Heart right ventricle (tissue), 16 donors: ENCODE measurements at regions of chr17 and their contacts with region 1.

Region 1: DNA sequence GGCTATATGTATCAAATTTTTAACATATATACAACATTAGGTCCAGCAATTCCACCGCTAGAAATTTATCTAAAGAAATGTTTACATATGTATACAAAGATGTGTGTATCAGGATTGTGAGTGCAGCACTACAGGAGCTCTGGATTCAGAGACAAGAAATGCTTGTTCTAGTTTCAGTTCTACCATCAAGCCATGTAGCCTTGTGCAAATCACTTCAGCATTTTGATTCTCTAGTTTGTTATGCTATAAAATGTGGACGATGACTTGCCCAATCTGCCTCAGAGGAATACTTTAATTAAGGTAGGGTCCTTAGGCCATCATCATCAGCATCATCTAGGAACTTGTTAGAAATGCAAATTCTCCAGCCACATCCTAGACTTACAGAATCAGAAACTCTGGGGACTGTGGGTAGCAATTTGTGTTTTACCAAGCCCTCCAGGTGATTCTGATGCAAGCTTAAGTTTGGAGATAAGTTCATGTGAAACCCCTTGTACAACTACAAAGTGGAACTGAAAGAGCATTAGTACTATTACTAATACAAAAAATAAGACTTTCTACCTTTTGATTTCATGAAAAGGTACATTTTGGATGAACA is 131.2 kb upstream of the CORO6 start:
- DNase-seq: no peak
- ATAC-seq: no peak
- H3K4me3 ChIP-seq: no peak overlapping the region
- H3K27ac ChIP-seq: peak overlapping the region in 1 of 10 donors; percentile 2
- H3K4me1 ChIP-seq: peaks cover 0 to 39% (median 8%) of the 10 kb centered on the region in 9 donors
- H3K27me3 ChIP-seq: no peaks in the 10 kb centered on the region
- CTCF ChIP-seq: no peak

Region 2: GRCh38 chr17:29705386-29705785 is 48.6 kb before region 1 on chr17:
- intact Hi-C with region 1: no loop called
- DNase-seq: no peak
- ATAC-seq: no peak
- H3K4me3 ChIP-seq: no peak overlapping the region
- H3K27ac ChIP-seq: peak overlapping the region in 9 of 10 donors; percentile 41 to 92 (median 63)
- H3K4me1 ChIP-seq: peaks cover 4 to 70% (median 55%) of the 10 kb centered on the region in 9 donors
- H3K27me3 ChIP-seq: no peaks in the 10 kb centered on the region
- CTCF ChIP-seq: no peak

Region 3: DNA sequence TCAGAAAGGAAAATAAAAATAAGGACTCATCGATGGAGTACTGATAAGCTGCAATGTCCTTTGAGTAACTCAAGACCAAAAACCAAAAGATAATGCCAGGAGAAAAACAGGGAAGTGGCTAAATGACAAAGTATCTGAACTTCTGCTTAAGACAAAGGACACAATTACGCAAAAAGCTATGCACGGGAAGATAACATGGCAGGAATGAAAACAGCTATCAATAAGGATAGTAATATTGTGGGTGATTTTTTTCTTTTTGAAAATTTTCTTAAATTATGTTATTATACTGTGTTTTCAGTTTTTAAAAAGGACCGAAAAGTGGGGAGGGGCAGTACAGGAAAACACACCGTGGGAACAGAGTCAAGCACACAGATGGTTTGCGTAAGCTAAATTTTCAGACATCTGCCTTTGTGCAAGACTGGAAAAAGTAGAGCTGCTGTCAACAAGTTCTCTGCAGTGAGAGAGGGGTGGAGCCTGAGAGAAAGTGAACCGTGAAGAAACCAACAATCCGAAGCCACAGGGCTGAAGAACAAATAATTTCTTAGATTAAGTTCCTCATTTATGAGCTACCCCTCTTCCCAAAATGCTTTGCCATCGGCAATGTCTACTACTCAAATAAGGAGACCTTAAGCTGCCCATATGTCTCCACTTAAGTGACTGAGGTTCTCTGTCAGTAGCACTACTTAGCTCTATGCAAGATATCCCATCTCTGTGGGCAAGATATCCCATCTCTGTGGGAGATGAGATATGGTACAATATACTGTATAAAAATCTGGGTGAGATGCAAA is 31.3 kb before region 1 on chr17:
- intact Hi-C with region 1: loop called in 1 of 10 experiments (anchors 5 kb)
- DNase-seq: peak in 1 of 2 donors; percentile 78
- ATAC-seq: peak; percentile 82 to 95 (median 90)
- H3K4me3 ChIP-seq: peak overlapping the region in 8 of 10 donors; percentile 2 to 43 (median 25)
- H3K27ac ChIP-seq: peak overlapping the region; percentile 44 to 94 (median 81)
- H3K4me1 ChIP-seq: peaks cover 7 to 96% (median 56%) of the 10 kb centered on the region in 9 donors
- H3K27me3 ChIP-seq: no peaks in the 10 kb centered on the region
- CTCF ChIP-seq: no peak